ENCODE measurements at regions of chr6 and their contacts with region 1.

Region 1: DNA sequence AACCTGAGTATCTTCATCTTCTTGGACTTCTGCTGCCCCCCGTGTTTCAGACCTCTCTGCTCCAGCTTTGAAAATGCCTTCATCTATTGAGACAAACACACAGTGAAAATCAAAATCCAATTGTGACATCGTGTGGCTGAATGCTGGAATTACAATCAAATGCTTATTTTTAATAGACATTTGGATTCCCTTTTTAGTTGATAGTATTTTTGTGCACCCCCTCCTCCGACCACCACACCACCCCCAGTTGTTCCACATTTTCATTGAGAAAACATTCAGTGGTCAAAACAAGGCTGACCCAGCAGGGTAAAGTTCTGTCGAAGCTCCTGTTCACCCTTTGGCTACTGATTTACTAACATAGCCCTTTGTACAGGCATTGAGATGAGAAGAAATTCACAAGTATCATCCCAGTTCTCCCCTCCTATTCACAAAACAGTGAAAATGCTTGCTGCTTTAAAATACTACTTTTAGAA is 79.0 kb downstream of the NRSN1 start:
- DNase-seq: peak; percentile 36
- H3K4me3 ChIP-seq: no peak overlapping the region
- H3K27ac ChIP-seq: no peak overlapping the region; a peak in 1 of 4 replicates
- H3K4me1 ChIP-seq: no peaks in the 10 kb centered on the region
- H3K27me3 ChIP-seq: no peaks in the 10 kb centered on the region
- CTCF ChIP-seq: peak; percentile 68
- EP300 ChIP-seq: no peak
- RAD21 ChIP-seq: peak; percentile 92

Region 2: GRCh38 chr6:23446394-23447046 is 758.5 kb before region 1 on chr6:
- CTCF ChIA-PET with region 1: interaction called, 13 read pairs
- POLR2A ChIA-PET with region 1: no interaction called
- DNase-seq: peak; percentile 42
- H3K4me3 ChIP-seq: peak overlapping the region in 1 of 2 experiments; percentile 37; a peak in 1 of 4 replicates
- H3K27ac ChIP-seq: peak overlapping the region in 1 of 2 experiments; percentile 98; a peak in 3 of 4 replicates
- H3K4me1 ChIP-seq: peaks cover 8 to 37% of the 10 kb centered on the region in 2 experiments; a peak in 3 of 4 replicates
- H3K27me3 ChIP-seq: no peaks in the 10 kb centered on the region
- CTCF ChIP-seq: peak; percentile 73
- EP300 ChIP-seq: peak in 1 of 2 experiments; percentile 70; a peak in 2 of 4 replicates
- RAD21 ChIP-seq: peak; percentile 96

Region 3: DNA sequence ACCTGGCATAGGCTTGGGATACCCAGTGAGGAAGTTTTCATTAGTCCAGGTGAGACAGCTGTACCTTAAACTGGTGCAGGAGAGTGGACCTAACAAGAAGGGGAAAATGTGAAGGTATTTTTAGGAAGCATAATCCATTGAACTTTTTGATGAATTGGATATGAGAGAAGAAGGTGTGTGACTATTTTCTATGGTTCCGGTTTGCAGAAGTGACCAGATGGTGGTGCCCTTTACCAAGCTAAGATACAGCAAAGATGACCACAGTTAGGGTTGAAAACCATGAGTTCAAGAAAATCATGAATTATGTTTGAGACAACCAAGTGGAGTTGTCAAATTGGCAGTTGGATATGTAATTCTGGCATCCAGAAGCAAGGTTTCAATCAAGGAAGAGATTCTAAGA is 141.0 kb before region 1 on chr6:
- CTCF ChIA-PET with region 1: interaction called, 25 read pairs
- POLR2A ChIA-PET with region 1: no interaction called
- DNase-seq: peak; percentile 21
- H3K4me3 ChIP-seq: peak overlapping the region in 1 of 2 experiments; percentile 34; a peak in 1 of 4 replicates
- H3K27ac ChIP-seq: no peak overlapping the region
- H3K4me1 ChIP-seq: no peaks in the 10 kb centered on the region
- H3K27me3 ChIP-seq: no peaks in the 10 kb centered on the region
- CTCF ChIP-seq: no peak
- EP300 ChIP-seq: no peak
- RAD21 ChIP-seq: peak; percentile 90

Region 4: DNA sequence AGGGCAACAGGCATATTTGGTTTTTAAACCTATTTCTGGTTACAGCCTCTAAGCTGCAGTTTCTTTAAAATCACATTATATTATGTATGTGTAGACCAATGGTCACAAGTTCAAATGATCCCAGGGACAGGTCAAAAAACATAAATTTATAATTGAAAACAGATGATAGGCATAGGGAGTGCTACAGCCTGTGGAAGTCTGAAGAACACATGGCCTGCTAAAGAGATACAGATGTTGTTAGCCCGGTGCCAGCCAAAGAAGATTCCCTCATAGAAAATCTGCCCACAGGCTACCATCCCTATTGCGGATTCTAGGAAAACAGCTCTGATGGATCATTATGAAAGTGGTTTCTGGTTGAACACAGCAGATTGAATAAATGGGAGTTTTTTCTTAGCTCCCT is 13.7 kb before region 1 on chr6:
- CTCF ChIA-PET with region 1: interaction called, 12 read pairs
- POLR2A ChIA-PET with region 1: no interaction called
- DNase-seq: peak; percentile 68
- H3K4me3 ChIP-seq: no peak overlapping the region
- H3K27ac ChIP-seq: peak overlapping the region in 1 of 2 experiments; percentile 98; a peak in 2 of 4 replicates
- H3K4me1 ChIP-seq: peaks cover 0 to 23% of the 10 kb centered on the region in 2 experiments; a peak in 2 of 4 replicates
- H3K27me3 ChIP-seq: no peaks in the 10 kb centered on the region
- CTCF ChIP-seq: no peak
- EP300 ChIP-seq: peak in 1 of 2 experiments; percentile 79; a peak in 1 of 4 replicates
- RAD21 ChIP-seq: no peak

Region 5: GRCh38 chr6:24223115-24223919 is 18.3 kb after region 1 on chr6:
- CTCF ChIA-PET with region 1: interaction called, 12 read pairs
- POLR2A ChIA-PET with region 1: interaction called, 3 read pairs
- DNase-seq: no peak
- H3K4me3 ChIP-seq: no peak overlapping the region
- H3K27ac ChIP-seq: no peak overlapping the region
- H3K4me1 ChIP-seq: peaks cover 0 to 7% of the 10 kb centered on the region in 2 experiments; a peak in 2 of 4 replicates
- H3K27me3 ChIP-seq: no peaks in the 10 kb centered on the region
- CTCF ChIP-seq: no peak
- EP300 ChIP-seq: no peak
- RAD21 ChIP-seq: no peak

Region 6: DNA sequence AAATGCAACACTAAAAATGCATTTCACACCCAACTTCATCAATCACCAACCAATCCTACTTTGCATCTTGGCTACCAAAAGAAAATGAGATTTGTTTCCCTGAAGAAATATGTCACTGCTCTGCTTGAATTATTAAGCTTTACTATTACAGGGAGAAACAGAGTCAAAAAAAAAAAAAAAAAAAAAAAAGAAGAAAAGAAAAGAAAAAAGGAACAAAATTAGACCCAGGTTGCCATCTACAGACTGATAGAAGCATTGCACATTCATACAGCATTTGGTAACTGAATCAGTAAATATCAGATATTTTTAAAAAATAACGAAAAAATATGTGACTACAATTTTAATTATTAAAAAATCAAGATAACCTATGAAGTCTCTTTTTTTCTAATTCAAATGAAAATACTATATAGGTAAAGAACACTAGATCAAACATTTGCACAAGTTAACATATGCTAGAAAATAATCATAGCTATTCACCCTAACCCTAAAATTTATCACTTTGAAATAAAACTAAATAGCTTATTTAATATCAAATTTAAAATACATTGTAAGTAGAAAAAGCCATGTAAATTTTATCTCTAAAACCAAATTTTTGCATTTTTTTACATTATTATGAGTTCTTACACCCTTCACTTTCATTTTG is 69.5 kb after region 1 on chr6:
- CTCF ChIA-PET with region 1: interaction called, 25 read pairs
- POLR2A ChIA-PET with region 1: no interaction called
- DNase-seq: peak; percentile 8
- H3K4me3 ChIP-seq: no peak overlapping the region
- H3K27ac ChIP-seq: no peak overlapping the region
- H3K4me1 ChIP-seq: peaks cover 0 to 5% of the 10 kb centered on the region in 2 experiments; a peak in 2 of 4 replicates
- H3K27me3 ChIP-seq: no peaks in the 10 kb centered on the region
- CTCF ChIP-seq: peak; percentile 70
- EP300 ChIP-seq: no peak
- RAD21 ChIP-seq: peak; percentile 76